Mammary epithelial cell (primary cell): ENCODE measurements at regions of chr10 and their contacts with region 1.

Region 1: GRCh38 chr10:49309626-49310411 is 10.8 kb downstream of the C10orf71 start:
- DNase-seq: no peak
- H3K4me3 ChIP-seq: no peak overlapping the region
- H3K27ac ChIP-seq: no peak overlapping the region
- H3K4me1 ChIP-seq: no peaks in the 10 kb centered on the region
- H3K27me3 ChIP-seq: peaks cover 3% of the 10 kb centered on the region
- CTCF ChIP-seq: no peak

Region 2: GRCh38 chr10:49272251-49273081 is 37.4 kb before region 1 on chr10:
- CTCF ChIA-PET with region 1: no interaction called
- dilution Hi-C with region 1: loop called (anchors 5 kb)
- in situ Hi-C with region 1: no loop called
- intact Hi-C with region 1: no loop called
- DNase-seq: no peak
- H3K4me3 ChIP-seq: no peak overlapping the region
- H3K27ac ChIP-seq: no peak overlapping the region
- H3K4me1 ChIP-seq: no peaks in the 10 kb centered on the region
- H3K27me3 ChIP-seq: no peaks in the 10 kb centered on the region
- CTCF ChIP-seq: no peak